Caco-2 (cell line): ENCODE measurements at regions of chr1 and their contacts with region 1.

Region 1: DNA sequence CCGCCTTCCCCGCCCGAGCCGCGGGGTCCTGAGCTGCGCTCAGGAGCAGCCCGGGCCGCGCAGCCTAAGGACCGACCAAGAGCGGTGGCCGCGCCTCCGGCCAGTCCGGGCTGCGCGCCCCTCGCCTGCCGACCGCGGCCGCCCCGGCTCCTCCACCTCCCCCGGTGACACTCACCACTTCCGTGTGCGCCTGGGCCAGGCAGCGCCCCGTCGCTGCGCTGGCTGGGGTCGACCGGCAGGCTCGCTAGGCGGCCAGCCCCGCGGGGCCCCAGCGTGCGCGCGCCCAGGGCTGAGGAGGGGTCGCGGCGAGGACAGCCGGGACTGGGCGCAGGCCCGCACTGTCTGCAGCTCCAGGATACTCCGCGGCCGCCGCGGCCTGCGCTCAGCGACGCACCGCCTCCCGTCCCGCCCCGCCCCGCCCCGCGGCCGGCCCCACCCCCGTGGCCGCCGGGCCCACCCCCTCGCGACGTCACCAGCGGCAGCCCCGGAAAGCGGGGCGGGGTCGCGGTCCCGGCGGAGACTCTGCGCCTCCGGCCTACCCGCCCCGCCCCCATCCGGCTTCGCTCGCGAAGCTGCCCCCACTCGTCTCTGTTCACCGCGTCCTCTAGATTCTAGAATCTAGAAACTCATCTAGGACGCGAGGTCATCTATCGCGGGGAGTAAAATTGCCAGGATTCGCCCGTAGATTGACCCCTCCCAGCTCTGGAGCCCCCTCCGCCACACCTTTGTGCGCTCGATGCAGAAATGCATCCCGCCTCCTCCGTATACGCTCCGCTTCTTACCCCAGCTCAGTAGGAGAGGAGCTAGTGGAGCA is at the start of gene JAK1:
- DNase-seq: peak; percentile 71 to 84
- H3K4me3 ChIP-seq: peak within 1 kb of the TSS; percentile 72
- H3K4me3 Mint-ChIP-seq: peak within 1 kb of the TSS; percentile 75
- H3K27ac Mint-ChIP-seq: peak within 1 kb of the TSS; percentile 39
- H3K4me1 ChIP-seq: no peaks in the 10 kb centered on the region
- H3K4me1 Mint-ChIP-seq: no peaks in the 10 kb centered on the region
- H3K27me3 ChIP-seq: no peaks in the 10 kb centered on the region
- H3K27me3 Mint-ChIP-seq: no peaks in the 10 kb centered on the region
- CTCF ChIP-seq: no peak
- total RNA-seq, gene JAK1: 35.5 and 35.7 TPM in 2 replicates

Region 2: GRCh38 chr1:64861611-64862010 is 104.8 kb before region 1 on chr1:
- CTCF ChIA-PET with region 1: no interaction called
- POLR2A ChIA-PET with region 1: no interaction called
- intact Hi-C with region 1: loop called (anchors 1 kb)
- DNase-seq: peak; percentile 60 to 64
- H3K4me3 ChIP-seq: no peak overlapping the region
- H3K4me3 Mint-ChIP-seq: no peak overlapping the region
- H3K27ac Mint-ChIP-seq: no peak overlapping the region
- H3K4me1 ChIP-seq: no peaks in the 10 kb centered on the region
- H3K4me1 Mint-ChIP-seq: peaks cover 7% of the 10 kb centered on the region
- H3K27me3 ChIP-seq: no peaks in the 10 kb centered on the region
- H3K27me3 Mint-ChIP-seq: no peaks in the 10 kb centered on the region
- CTCF ChIP-seq: peak in 1 of 2 experiments; percentile 47

Region 3: DNA sequence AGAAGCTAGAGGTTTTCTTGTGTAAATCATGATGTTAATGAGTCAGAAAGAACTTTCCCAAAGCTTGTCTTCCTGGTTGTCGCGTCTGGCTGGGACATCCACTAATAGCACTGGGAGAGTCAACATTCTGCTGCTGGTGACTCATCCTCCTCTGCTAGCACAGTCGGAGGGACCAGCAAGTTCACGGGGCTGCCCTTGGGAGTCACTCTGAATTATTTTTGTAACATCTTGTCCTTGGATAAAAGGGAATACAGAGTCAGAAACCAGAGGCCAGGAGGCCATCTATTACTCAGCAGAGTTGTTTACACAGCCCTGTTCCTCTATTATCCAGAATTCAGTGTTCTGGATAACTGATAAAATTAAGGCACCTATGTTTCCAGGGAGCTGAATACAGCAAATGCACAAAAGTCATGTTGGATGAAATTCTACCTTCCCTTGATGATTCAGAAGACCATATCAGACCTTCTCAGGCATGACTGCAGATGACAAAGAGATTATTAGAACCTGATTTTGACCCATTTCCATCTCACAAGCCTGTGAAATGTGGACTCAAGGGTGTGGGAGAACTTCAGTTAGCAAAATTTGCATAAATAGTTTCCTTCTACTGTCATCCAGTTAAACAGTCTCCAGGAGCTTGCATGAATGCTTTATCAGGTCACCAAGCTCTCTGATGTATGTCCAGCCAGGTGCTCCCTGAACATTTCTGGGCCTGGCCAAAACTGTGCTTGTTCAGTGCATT is 68.1 kb before region 1 on chr1:
- CTCF ChIA-PET with region 1: no interaction called
- POLR2A ChIA-PET with region 1: no interaction called
- intact Hi-C with region 1: loop called (anchors 1 kb)
- DNase-seq: peak; percentile 67 to 78
- H3K4me3 ChIP-seq: no peak overlapping the region
- H3K4me3 Mint-ChIP-seq: no peak overlapping the region
- H3K27ac Mint-ChIP-seq: peak overlapping the region; percentile 52
- H3K4me1 ChIP-seq: peaks cover 49% of the 10 kb centered on the region
- H3K4me1 Mint-ChIP-seq: peaks cover 32% of the 10 kb centered on the region
- H3K27me3 ChIP-seq: no peaks in the 10 kb centered on the region
- H3K27me3 Mint-ChIP-seq: no peaks in the 10 kb centered on the region
- CTCF ChIP-seq: no peak

Region 4: GRCh38 chr1:64917328-64917861 is 49.0 kb before region 1 on chr1:
- CTCF ChIA-PET with region 1: no interaction called
- POLR2A ChIA-PET with region 1: no interaction called
- intact Hi-C with region 1: loop called (anchors 5 kb)
- DNase-seq: no peak
- H3K4me3 ChIP-seq: no peak overlapping the region
- H3K4me3 Mint-ChIP-seq: no peak overlapping the region
- H3K27ac Mint-ChIP-seq: peak overlapping the region; percentile 92
- H3K4me1 ChIP-seq: peaks cover 50% of the 10 kb centered on the region
- H3K4me1 Mint-ChIP-seq: peaks cover 33% of the 10 kb centered on the region
- H3K27me3 ChIP-seq: no peaks in the 10 kb centered on the region
- H3K27me3 Mint-ChIP-seq: no peaks in the 10 kb centered on the region
- CTCF ChIP-seq: no peak

Region 5: GRCh38 chr1:64983150-64983549 is 16.8 kb after region 1 on chr1:
- CTCF ChIA-PET with region 1: no interaction called
- POLR2A ChIA-PET with region 1: interaction called, 9 read pairs
- intact Hi-C with region 1: loop called (anchors 2 kb)
- DNase-seq: peak; percentile 78 to 85
- H3K4me3 ChIP-seq: no peak overlapping the region
- H3K4me3 Mint-ChIP-seq: peak overlapping the region; percentile 45
- H3K27ac Mint-ChIP-seq: peak overlapping the region; percentile 85
- H3K4me1 ChIP-seq: peaks cover 42% of the 10 kb centered on the region
- H3K4me1 Mint-ChIP-seq: peaks cover 37% of the 10 kb centered on the region
- H3K27me3 ChIP-seq: no peaks in the 10 kb centered on the region
- H3K27me3 Mint-ChIP-seq: no peaks in the 10 kb centered on the region
- CTCF ChIP-seq: no peak

Region 6: GRCh38 chr1:65002508-65003315 is 36.3 kb after region 1 on chr1:
- CTCF ChIA-PET with region 1: no interaction called
- POLR2A ChIA-PET with region 1: interaction called, 5 read pairs
- intact Hi-C with region 1: loop called (anchors 5 kb)
- DNase-seq: peak; percentile 55 to 70
- H3K4me3 ChIP-seq: peak overlapping the region; percentile 60
- H3K4me3 Mint-ChIP-seq: peak overlapping the region; percentile 75
- H3K27ac Mint-ChIP-seq: peak overlapping the region; percentile 60
- H3K4me1 ChIP-seq: peaks cover 10% of the 10 kb centered on the region; the same call in 1 of the 2 replicates
- H3K4me1 Mint-ChIP-seq: peaks cover 7% of the 10 kb centered on the region
- H3K27me3 ChIP-seq: no peaks in the 10 kb centered on the region
- H3K27me3 Mint-ChIP-seq: no peaks in the 10 kb centered on the region
- CTCF ChIP-seq: no peak

Region 7: GRCh38 chr1:65048335-65048734 is 82.0 kb after region 1 on chr1:
- CTCF ChIA-PET with region 1: no interaction called
- POLR2A ChIA-PET with region 1: no interaction called
- intact Hi-C with region 1: no loop called
- DNase-seq: no peak
- H3K4me3 ChIP-seq: no peak overlapping the region
- H3K4me3 Mint-ChIP-seq: no peak overlapping the region
- H3K27ac Mint-ChIP-seq: no peak overlapping the region
- H3K4me1 ChIP-seq: no peaks in the 10 kb centered on the region
- H3K4me1 Mint-ChIP-seq: no peaks in the 10 kb centered on the region
- H3K27me3 ChIP-seq: no peaks in the 10 kb centered on the region
- H3K27me3 Mint-ChIP-seq: no peaks in the 10 kb centered on the region
- CTCF ChIP-seq: no peak